Esophagus muscularis mucosa (tissue), 4 donors: ENCODE measurements at regions of chr12 and their contacts with region 1.

Region 1: GRCh38 chr12:107884769-107885694 is 110.5 kb downstream of the ASCL4 start:
- DNase-seq: no peak
- H3K4me3 ChIP-seq: no peak overlapping the region
- H3K27ac ChIP-seq: no peak overlapping the region
- H3K4me1 ChIP-seq: no peaks in the 10 kb centered on the region
- H3K27me3 ChIP-seq: peaks cover 0 to 14% (median 0%) of the 10 kb centered on the region in 4 donors
- CTCF ChIP-seq: peak; percentile 48 to 65 (median 55)
- EP300 ChIP-seq: no peak
- POLR2A ChIP-seq: no peak

Region 2: DNA sequence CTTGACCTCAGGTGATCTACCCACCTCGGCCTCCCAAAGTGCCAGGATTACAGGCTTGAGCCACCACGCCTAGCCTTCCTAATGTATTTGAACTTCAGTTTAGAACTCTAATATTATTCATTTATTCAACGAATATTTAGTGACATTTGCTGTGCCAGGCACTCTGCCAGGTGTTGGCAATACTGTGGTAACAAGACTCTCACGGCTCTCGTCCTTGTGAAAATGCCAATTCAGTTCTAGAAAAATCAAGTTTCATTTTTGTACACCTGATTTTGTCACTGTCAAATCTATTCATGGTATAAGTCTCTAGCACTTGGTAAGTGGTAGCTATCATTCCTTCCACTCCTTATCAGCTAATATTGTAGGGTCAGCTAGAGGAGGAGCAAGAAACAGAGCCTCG is 205.7 kb before region 1 on chr12:
- intact Hi-C with region 1: loop called (anchors 5 kb)
- DNase-seq: no peak
- H3K4me3 ChIP-seq: no peak overlapping the region
- H3K27ac ChIP-seq: no peak overlapping the region
- H3K4me1 ChIP-seq: peaks cover 0 to 3% (median under 1%) of the 10 kb centered on the region in 4 donors
- H3K27me3 ChIP-seq: peaks cover 0 to 46% (median 0%) of the 10 kb centered on the region in 4 donors
- CTCF ChIP-seq: no peak
- EP300 ChIP-seq: no peak
- POLR2A ChIP-seq: no peak

Region 3: DNA sequence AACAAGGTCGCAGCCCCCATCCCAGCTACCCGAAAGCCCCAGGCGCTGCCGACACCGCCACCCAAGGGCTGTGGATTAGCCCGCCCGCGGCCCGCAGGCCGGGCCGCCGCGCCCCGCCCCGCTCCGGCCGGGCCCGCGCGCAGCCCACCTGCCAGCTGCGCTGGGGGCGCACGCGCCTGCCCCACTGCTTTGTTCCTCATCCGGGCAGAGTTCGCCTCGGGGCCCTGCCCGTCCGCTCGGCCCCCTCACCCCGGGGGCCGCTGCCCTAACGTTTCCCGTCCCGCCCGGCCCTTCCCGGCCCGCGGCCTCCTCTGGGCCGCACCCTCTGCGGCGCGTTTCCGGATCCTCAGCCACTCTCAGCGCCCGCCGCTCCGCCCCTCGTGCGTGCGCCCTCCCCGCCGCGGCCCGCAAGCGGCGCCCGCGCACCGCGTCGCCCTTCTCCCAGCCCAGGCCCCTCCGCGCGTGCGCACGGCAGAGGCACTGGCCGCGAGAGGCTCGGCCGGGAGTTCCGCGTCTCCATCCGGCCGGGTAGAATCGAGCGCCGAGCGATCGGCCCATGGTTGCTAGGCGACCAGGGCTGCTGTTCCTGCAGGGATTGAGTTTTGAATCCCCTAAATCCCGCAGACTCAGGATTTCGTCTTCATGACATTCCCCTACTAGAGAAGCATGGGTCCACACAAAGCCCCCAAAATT is 124.1 kb before region 1 on chr12 and contains the start of gene PRDM4:
- intact Hi-C with region 1: loop called (anchors 10 kb)
- DNase-seq: peak; percentile 97
- H3K4me3 ChIP-seq: peak within 1 kb of the TSS; percentile 82 to 91 (median 84)
- H3K27ac ChIP-seq: peak within 1 kb of the TSS; percentile 69 to 79 (median 77)
- H3K4me1 ChIP-seq: peaks cover 23 to 42% (median 38%) of the 10 kb centered on the region in 4 donors
- H3K27me3 ChIP-seq: no peaks in the 10 kb centered on the region
- CTCF ChIP-seq: peak; percentile 40 to 63 (median 43)
- EP300 ChIP-seq: no peak
- POLR2A ChIP-seq: peak; percentile 65
- total RNA-seq, gene PRDM4: 18.3 to 29.4 (median 26.8) TPM

Region 4: DNA sequence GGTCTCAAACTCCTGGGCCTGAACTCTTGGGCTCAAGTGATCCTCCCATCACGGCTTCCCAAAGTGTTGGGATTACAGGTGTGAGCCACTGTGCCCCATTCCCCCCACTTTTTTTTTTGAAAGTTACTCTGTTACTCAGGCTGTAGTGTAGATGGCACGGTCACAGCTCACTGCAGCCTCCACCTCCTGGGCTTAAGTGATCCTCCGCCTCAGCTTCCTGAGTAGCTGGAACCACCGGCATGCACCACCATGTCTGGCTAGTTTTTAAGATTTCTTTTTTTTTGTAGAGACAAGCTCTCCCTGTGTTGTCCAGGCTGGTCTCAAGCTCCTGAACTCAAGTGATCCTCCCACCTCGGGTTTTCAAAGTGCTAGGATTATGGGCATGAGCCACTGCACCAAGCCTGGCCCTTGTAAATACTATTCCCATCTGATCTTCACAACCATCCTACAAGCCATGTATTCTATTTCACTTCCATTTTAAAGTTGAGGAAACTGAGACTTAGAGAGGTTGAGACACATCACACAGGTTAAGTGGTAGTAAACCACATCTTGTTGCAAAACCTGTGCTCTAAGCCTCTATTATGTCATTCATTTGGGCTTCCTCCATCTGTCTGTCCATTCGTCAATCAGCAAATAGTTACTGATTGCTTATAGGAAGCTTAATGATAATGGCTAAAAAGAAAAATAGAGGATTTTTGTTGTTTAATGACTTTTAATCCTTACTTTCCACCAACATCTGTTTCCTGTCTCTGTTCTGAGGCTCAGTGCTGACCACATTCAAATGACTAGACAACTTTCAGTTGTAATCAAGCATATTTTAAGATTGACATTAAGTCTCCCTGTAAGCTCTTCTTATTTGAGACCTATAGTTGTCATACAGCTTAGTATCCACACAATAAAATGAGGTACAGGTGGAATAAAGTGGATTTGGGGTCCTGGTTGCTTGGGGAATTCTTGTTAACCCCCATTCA is 101.3 kb before region 1 on chr12:
- intact Hi-C with region 1: no loop called
- DNase-seq: no peak
- H3K4me3 ChIP-seq: no peak overlapping the region
- H3K27ac ChIP-seq: no peak overlapping the region
- H3K4me1 ChIP-seq: no peaks in the 10 kb centered on the region
- H3K27me3 ChIP-seq: peaks cover 0 to 9% (median 0%) of the 10 kb centered on the region in 4 donors
- CTCF ChIP-seq: no peak
- EP300 ChIP-seq: no peak
- POLR2A ChIP-seq: no peak